GM13976 (cell line): ENCODE measurements at regions of chr20 and their contacts with region 1.

Region 1: GRCh38 chr20:19205977-19206396 is 6.5 kb upstream of the SLC24A3 start:
- DNase-seq: peak; percentile 72
- CTCF ChIP-seq: peak; percentile 71

Region 2: DNA sequence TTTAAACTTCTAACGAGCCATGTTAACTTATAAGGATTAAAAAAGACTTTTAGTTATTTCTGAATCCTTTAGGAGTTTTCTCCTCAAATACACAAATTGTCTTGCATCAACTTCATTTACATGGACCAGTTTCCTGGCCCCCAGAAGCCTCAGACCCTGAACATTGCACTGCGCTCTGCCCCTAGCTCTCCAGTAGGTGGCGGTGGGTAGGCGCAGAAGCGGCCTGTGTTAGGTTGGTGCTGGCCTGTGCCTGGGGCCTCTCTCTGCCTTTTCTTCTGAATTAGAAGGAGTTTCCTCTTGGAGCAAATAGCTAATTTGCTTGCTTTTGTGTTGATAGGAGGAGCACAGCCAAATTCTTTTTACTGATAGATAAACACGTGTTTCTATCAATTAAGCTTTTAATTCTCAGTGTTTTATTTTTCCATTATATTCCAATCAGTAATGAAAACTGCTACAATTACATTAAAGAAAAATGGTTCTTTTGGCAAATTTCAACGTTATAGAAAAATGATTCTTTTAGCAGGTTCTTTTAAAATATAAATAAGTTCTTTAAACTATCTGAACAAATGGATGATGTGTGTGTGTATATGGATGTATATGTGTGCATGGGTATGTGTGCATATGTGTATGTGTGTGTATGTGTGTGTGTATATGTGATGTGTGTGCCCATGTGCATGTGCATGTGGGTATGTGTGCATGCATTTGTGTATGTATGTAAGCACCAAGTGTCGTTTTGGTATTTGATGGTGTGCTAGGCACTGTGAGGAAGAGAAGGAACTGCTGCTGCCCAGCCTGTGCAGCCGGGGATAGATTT is 573.6 kb before region 1 on chr20:
- in situ Hi-C with region 1: loop called (anchors 25 kb)
- DNase-seq: peak; percentile 68
- CTCF ChIP-seq: peak; percentile 97

Region 3: DNA sequence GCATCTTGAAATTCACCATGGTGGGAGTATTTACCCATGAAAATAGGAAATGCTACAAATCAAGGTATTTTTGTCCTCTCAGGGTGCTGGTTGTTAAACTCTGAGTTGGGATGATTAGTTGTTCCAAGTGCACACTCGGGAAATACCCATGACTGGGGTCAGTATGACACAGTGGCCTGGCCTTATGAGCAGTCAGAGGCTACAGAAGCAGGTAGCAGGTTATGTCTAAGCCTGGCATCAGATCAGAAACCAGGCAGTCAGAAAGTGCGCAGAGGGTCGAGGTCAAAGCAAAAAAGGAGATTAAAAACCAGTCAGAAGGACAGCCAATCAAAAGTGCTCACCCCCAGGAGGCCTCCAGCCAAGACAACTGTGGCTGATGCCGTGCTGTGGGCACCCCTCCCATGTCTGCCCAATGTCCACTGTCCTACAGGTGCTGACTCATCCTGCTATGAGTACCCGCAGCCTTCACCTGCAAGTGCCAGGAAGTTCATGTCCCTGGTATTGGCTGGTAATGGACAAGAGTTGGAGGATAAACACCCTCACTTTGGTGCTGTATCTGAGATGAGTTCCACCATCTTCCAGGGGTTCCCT is 110.9 kb before region 1 on chr20:
- in situ Hi-C with region 1: no loop called
- DNase-seq: no peak
- CTCF ChIP-seq: no peak

Region 4: GRCh38 chr20:19583532-19584175 is 377.7 kb after region 1 on chr20:
- in situ Hi-C with region 1: loop called (anchors 10 kb)
- DNase-seq: peak; percentile 79
- CTCF ChIP-seq: peak; percentile 68

Region 5: DNA sequence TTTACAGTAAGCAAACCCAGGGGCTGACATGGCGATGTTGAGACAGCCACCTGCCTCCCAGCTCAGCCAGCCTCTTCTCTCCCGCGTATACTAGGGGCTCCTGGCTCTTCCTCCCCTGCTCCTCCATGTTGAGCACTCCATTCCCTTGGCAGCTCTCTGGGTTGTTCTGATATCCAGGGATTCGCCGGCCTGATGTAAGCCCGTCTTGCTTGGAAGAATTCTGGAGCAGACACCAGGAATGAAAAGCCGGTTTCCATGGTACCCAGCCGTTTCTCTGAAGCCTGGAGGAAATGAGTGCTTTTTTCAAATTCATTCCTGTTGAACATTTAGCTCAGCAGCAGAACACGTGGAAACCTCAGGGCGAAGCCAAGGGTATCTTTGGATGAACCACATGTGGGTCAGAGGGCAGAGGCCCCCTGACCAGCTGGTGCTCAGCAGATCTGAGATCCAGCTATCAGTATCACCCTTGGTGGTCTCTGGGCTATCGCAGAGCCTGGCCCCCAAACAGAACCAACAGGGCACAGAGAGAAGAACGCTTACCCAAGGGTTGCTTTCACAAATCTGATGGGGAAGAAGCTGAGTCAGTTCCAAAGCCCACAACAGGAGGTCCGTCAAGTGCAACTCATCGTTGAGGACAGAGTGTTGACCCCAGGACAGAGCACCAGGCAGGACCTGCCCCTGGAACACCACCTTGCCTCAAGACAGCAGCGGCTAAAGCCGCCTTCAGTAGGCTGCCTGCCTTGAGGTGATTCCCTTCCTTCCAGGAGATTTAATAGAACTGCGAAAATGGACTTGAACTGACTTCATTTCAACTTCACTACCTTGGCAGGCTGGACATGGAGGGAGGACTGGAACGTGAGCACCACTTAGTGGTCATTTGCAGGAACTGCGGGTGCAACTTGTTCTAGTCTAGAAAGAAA is 456.0 kb after region 1 on chr20:
- in situ Hi-C with region 1: loop called (anchors 25 kb)
- DNase-seq: peak; percentile 65
- CTCF ChIP-seq: peak; percentile 95